ENCODE measurements at regions of chr2 and their contacts with region 1.

Region 1: DNA sequence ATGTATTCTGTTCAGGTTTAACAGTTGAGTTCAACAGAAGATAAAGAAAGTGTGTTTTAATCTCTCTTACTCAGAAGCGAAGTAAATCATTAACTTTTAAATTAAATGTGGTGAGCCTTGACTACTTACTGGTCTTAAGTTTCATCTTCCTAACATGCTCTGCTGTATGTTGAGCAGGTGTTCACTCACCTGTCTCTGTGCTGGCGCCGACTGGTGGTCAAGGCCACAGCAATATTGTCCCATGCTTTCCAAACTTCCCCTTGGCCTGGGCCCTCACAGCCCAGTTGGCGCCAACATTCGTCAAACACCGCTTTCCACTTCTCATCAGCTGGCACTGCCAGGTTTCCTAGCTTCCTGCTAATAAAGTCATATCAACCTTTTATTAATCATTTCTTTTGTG is 17.0 kb upstream of the MPP4 start:
- DNase-seq: no peak
- ATAC-seq: no peak

Region 2: DNA sequence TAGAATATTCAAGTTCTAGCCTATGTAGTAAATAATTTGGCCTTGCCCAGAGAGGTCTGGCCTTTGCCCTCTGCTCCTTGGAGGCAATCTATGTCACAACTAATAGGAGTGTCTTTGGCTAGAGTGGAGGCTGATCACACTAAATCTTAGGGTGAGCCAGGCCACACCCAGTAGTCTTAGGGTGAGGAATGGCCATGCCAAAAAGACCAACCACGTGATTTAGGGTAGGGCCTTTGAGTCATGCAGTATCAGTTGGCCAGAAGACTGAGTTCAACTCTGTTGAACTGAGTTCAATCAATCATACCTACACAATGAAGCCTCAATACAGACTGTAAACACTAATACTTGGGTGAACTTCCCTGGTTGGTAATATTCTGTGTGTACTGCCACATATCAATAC is 332.3 kb before region 1 on chr2:
- intact Hi-C with region 1: loop called (anchors 10 kb)
- DNase-seq: no peak
- ATAC-seq: peak; percentile 39